AG04449 (cell line): ENCODE measurements at regions of chr11 and their contacts with region 1.

Region 1: GRCh38 chr11:130861902-130862860 is 54.1 kb downstream of the SNX19 start:
- DNase-seq: peak; percentile 65
- H3K4me3 ChIP-seq: no peak overlapping the region
- CTCF ChIP-seq: peak; percentile 100

Region 2: DNA sequence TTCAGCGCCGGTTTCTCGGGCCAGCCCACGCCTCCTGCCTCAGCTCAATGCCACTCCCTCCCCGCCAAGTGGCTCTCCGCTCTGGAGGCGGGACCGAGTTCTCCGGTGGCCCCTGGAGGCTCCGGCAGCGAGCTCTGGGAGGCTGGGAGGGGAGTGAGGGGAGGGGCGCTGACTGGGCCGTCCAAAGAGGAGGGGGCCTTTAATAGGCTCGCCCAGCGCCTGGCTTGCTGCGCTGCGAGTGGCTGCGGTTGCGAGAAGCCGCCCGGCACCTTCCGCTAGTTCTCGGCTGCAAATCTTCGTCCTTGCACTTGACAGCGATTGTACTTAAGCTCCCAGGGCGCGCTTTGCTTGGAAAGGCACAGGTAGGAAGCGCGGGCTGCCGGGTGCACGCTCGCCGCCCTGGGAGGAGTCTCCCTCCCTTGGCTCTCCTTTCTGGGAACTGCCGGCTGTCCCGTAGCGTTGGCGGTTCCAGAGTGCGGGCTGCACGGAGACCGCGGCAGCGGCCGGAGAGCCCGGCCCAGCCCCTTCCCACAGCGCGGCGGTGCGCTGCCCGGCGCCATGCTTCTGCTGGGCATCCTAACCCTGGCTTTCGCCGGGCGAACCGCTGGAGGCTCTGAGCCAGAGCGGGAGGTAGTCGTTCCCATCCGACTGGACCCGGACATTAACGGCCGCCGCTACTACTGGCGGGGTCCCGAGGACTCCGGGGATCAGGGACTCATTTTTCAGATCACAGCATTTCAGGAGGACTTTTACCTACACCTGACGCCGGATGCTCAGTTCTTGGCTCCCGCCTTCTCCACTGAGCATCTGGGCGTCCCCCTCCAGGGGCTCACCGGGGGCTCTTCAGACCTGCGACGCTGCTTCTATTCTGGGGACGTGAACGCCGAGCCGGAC is 413.5 kb before region 1 on chr11 and contains the start of gene ADAMTS15:
- CTCF ChIA-PET with region 1: interaction called, 1,136 read pairs
- POLR2A ChIA-PET with region 1: no interaction called
- DNase-seq: no peak
- H3K4me3 ChIP-seq: peak within 1 kb of the TSS; percentile 66
- CTCF ChIP-seq: no peak

Region 3: DNA sequence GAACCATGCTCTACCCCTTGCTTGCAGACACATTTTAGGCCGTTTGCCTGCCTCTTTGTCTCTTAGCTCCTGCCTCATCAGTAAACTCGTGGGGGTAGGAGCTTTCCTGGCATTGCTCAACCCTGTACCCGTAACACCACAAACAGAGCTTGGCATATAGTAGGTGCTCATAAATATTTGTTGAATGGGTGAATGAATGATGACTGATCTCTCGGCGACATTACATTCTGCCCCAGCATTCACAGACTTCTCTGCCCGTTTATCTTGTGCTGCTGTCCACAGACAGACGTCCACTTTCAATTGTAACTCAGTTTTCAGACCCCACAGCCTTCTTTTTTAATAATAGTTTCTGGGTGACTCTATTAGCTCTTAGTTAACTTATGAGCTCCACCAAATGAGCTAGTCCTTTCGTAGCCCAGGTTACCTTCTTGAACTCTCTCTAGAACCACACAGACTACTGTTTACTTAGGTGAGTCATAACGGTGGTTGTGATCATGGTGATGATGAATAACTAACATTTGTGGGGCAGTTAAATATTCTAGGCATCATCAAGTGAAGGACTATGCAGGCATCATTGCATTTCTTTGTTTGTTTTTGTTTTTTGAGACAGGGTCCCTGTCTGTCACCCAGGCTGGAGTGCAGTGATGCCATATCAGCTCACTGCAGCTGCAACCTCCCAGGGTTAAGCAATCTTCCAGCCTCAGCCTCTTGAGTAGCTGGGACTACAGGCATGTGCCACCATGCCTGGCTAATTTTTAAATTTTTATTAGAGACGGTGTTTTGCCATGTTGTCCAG is 225.3 kb before region 1 on chr11:
- CTCF ChIA-PET with region 1: interaction called, 12 read pairs
- POLR2A ChIA-PET with region 1: no interaction called
- DNase-seq: no peak
- H3K4me3 ChIP-seq: no peak overlapping the region
- CTCF ChIP-seq: no peak

Region 4: GRCh38 chr11:130731401-130731800 is 130.8 kb before region 1 on chr11:
- CTCF ChIA-PET with region 1: no interaction called
- POLR2A ChIA-PET with region 1: no interaction called
- DNase-seq: no peak
- H3K4me3 ChIP-seq: no peak overlapping the region
- CTCF ChIP-seq: no peak

Region 5: GRCh38 chr11:130832566-130833425 is 29.4 kb before region 1 on chr11:
- CTCF ChIA-PET with region 1: interaction called, 92 read pairs
- POLR2A ChIA-PET with region 1: no interaction called
- DNase-seq: no peak
- H3K4me3 ChIP-seq: no peak overlapping the region
- CTCF ChIP-seq: no peak

Region 6: DNA sequence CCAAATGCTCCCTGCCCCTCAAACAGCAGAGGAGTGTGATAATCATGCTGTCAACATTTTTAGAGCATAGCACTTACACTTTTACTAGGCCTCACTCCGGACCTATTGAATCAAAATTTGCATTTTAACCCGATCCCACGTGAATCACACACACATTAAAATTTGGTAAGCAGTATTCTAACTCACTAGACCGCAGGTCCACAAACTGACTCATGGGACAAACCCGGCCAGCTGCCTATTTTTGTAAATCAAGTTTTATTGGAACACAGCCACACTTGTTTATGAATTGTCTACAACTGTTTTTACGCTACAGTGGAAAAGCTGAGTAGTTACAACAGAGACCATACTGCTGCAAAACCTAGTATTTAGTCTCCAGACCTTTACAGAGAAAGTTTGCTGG is 10.8 kb after region 1 on chr11:
- CTCF ChIA-PET with region 1: interaction called, 181 read pairs
- POLR2A ChIA-PET with region 1: no interaction called
- DNase-seq: no peak
- H3K4me3 ChIP-seq: no peak overlapping the region
- CTCF ChIP-seq: no peak